ENCODE measurements at regions of chr1 and their contacts with region 1.

Region 1: DNA sequence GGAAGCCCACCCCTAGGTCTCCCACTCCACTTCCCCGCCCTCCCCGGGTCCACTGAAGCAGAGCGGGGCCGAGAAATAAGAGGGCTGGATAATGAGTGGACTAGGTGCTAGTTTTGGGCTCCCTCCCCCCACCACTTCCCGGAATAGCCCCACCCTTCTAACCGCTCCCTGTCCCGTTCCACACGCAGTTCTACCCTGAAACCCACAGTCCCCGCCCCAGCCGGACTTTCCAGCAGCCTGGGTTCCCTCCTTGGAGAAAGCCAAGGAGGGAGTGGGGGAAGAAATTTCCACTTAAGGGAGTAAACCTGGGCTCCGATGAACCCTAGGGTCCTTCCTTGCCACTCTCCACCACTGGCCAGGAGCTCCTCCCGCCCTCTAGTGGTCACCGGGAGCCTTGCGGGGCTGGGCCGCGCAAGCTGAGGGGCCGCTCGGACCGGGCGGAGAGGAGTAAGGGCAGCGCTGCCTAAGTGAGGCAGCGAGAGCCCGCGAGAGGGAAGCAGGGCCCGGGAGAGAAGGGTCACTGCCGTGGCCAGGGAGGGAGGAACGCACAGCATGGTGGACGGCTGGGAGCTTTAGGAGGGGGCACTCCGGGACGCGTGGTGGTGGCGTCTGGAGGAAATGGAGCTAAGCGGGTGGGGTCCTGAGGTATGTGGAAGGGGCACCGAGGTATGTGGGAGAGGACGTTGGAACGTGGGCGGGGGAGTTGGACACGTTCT is 14.3 kb downstream of the THBS3 start:
- DNase-seq: peak; percentile 81
- H3K4me3 Mint-ChIP-seq: peak overlapping the region; percentile 83
- H3K27ac Mint-ChIP-seq: peak overlapping the region; percentile 99
- H3K4me1 Mint-ChIP-seq: peaks cover 39% of the 10 kb centered on the region
- H3K27me3 Mint-ChIP-seq: no peaks in the 10 kb centered on the region

Region 2: DNA sequence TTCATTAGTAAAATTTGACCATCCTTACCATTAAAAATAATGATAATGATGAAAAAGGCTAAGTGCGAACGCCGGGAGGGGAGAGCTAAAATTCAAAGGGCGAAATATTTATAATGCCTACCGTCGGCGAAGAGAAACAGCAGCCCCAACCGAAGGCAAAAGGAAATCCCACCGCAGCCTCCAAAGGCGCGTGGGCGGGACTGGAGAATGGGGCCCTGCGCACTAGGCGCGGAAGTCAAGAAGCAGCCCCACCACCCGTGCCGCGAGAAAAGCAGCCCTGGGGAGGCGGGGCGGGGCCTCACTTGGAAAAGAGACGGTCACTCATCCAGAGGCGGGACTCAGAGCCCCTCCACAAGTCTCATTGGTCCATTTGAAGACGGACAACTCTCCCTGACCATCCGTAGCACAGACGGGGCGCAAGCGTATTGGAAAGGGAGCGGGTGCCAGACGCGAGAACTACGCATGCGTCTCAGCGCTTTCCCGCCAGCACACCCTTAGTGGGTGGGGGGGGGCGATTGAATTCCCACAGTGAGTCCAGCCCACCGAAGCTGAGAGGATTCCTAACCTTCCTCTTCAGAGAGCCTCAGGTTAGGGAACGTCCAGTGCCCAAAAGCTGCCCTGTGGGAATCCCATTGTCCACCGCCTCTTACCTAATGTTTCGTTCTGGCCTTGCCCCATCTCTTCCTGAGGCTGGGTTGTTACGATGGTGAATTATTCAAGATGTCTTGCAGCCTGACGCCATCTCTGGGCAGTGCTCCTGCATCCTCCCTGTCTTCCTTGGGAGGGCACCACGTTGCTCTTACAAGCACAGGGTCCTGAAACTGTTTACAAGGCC is 34.0 kb after region 1 on chr1:
- CTCF ChIA-PET with region 1: interaction called, 13 read pairs
- DNase-seq: peak; percentile 100
- H3K4me3 Mint-ChIP-seq: peak overlapping the region; percentile 88
- H3K27ac Mint-ChIP-seq: peak overlapping the region; percentile 90
- H3K4me1 Mint-ChIP-seq: peaks cover 38% of the 10 kb centered on the region
- H3K27me3 Mint-ChIP-seq: peaks cover 4% of the 10 kb centered on the region

Region 3: DNA sequence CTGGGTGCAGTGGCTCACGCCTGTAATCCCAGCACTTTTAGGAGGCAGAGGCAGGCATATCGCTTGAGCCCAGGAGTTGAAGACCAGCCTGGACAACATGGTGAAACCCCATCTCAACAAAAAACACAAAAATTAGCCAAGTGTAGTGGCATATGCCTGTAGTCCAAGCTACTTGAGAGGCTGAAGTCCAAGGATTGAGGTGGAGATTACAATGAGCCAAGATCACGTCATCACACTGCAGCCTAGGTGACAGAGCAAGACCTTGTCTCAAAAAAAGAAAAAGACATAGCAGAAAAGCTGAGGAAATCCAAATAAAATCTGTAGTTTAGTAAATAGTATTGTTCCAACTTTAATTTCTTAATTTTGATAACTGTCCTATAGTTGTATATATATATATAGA is 380.6 kb after region 1 on chr1:
- CTCF ChIA-PET with region 1: no interaction called
- DNase-seq: no peak
- H3K4me3 Mint-ChIP-seq: no peak overlapping the region
- H3K27ac Mint-ChIP-seq: no peak overlapping the region
- H3K4me1 Mint-ChIP-seq: peaks cover 2% of the 10 kb centered on the region
- H3K27me3 Mint-ChIP-seq: no peaks in the 10 kb centered on the region

Measured in activated naive CD4-positive, alpha-beta T cell treated with anti-CD3 and anti-CD28 coated beads, Interleukin-2, amount 10 ng/mL, durations not matched to agents 7 days and 5 days (primary cell).